Heart right ventricle (tissue), 16 donors: ENCODE measurements at regions of chr13 and their contacts with region 1.

Region 1: DNA sequence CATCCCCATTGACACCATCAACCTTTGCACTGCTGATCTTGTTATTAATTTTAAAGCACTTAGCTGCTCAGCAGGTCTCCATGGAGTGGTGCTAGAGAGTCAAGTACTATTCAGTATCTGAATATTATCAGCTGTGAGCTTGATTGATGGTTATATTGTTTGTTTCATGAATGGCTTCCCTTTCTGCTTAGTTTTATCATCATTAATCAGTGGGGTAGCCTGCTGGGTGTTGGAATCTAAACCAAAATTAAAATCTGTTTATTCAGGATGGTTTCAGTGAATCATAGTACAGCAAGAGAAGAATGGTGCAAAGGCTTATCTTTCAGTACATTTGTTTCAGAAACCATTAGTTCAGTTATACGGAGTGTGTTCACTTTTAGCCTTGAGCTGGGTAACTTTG is 42.5 kb upstream of the SCEL start:
- DNase-seq: no peak
- ATAC-seq: peak in 5 of 8 donors; percentile 33 to 58 (median 49)
- H3K4me3 ChIP-seq: no peak overlapping the region
- H3K27ac ChIP-seq: no peak overlapping the region
- H3K4me1 ChIP-seq: peaks cover 0 to 8% (median 0%) of the 10 kb centered on the region in 9 donors
- H3K27me3 ChIP-seq: no peaks in the 10 kb centered on the region
- CTCF ChIP-seq: peak in 7 of 9 donors; percentile 35 to 64 (median 52)

Region 2: DNA sequence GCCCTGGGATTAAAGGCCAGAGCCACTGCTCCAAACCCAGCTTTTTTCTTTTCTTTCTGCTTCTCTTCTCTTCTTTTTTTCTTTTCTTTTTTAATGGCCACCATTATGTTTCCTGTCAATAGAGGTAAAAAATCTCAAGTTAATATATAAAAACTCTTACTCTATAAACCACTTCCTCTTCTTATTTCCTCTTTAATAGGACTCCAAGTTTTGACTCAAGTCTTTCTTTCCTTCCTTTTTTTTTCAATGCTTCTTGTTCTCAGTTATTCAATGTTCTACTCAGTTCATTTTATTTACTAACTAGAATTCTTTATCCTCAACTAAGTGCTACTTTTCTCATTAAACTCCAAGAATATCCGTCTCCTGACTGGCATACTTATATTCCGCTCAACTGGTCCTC is 139.0 kb before region 1 on chr13:
- intact Hi-C with region 1: no loop called
- DNase-seq: no peak
- ATAC-seq: no peak
- H3K4me3 ChIP-seq: no peak overlapping the region
- H3K27ac ChIP-seq: peak overlapping the region in 1 of 10 donors; percentile 49
- H3K4me1 ChIP-seq: peaks cover 0 to 26% (median 0%) of the 10 kb centered on the region in 9 donors
- H3K27me3 ChIP-seq: peaks cover 0 to 5% (median 0%) of the 10 kb centered on the region in 7 donors
- CTCF ChIP-seq: no peak

Region 3: DNA sequence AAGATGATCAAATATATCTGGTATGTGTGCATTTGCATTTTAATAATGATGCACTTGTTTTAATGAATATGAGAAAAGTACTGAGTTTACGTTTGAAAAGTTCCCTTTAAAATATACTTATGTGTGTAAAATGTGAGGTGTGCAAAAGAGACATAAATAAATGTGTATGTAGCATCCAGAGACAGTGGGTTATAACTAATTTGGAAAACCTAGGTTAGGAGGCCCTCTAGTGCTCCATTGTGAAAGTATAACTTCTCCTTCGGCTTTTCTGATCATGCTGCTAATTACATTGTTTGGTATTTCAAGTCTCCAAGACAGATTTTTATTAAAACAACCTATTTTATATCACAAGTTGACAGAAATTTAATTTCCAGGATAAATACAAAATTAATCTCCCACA is 72.7 kb after region 1 on chr13:
- intact Hi-C with region 1: loop called in 5 of 10 experiments (anchors 5 to 10 kb)
- DNase-seq: no peak
- ATAC-seq: peak in 1 of 8 donors; percentile 55
- H3K4me3 ChIP-seq: no peak overlapping the region
- H3K27ac ChIP-seq: no peak overlapping the region
- H3K4me1 ChIP-seq: no peaks in the 10 kb centered on the region
- H3K27me3 ChIP-seq: peaks cover 0 to 20% (median 0%) of the 10 kb centered on the region in 7 donors
- CTCF ChIP-seq: peak in 7 of 9 donors; percentile 22 to 61 (median 53)